ENCODE measurements at regions of chr7 and their contacts with region 1.

Region 1: GRCh38 chr7:137221467-137221866 is 122.1 kb downstream of the PTN start:
- DNase-seq: no peak
- H3K4me3 ChIP-seq: no peak overlapping the region
- H3K27ac ChIP-seq: no peak overlapping the region
- H3K4me1 ChIP-seq: no peaks in the 10 kb centered on the region
- H3K27me3 ChIP-seq: no peaks in the 10 kb centered on the region
- CTCF ChIP-seq: no peak
- POLR2A ChIP-seq: no peak

Region 2: GRCh38 chr7:137120690-137121089 is 100.8 kb before region 1 on chr7:
- intact Hi-C with region 1: no loop called
- DNase-seq: no peak
- H3K4me3 ChIP-seq: no peak overlapping the region
- H3K27ac ChIP-seq: no peak overlapping the region
- H3K4me1 ChIP-seq: no peaks in the 10 kb centered on the region
- H3K27me3 ChIP-seq: no peaks in the 10 kb centered on the region
- CTCF ChIP-seq: no peak
- POLR2A ChIP-seq: no peak

Region 3: DNA sequence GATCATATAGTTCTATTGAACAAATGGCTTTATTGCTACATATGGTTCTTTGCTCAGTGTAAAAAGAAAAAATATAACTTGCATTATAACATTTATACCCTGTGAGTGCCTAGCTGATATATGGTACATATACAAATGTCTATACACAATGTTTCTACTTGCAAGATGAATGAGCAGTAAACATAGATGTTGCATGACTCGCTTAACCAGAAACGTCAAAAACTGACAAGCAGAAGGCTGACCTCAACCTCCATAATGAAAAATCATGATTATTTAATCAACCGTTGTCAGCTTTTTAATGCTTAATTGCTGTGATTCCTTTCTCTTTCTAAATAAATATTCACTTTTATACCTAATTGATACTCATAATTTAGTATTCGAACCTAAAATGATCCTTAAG is 61.2 kb before region 1 on chr7:
- intact Hi-C with region 1: loop called (anchors 2 kb)
- DNase-seq: no peak
- H3K4me3 ChIP-seq: no peak overlapping the region
- H3K27ac ChIP-seq: no peak overlapping the region
- H3K4me1 ChIP-seq: no peaks in the 10 kb centered on the region
- H3K27me3 ChIP-seq: no peaks in the 10 kb centered on the region
- CTCF ChIP-seq: no peak
- POLR2A ChIP-seq: no peak